AG04450 (cell line): ENCODE measurements at regions of chr2 and their contacts with region 1.

Region 1: GRCh38 chr2:128692895-128693742 is 374.5 kb upstream of the HS6ST1 start:
- DNase-seq: no peak
- H3K4me3 ChIP-seq: no peak overlapping the region
- H3K27ac ChIP-seq: no peak overlapping the region
- H3K27me3 ChIP-seq: peaks cover 39% of the 10 kb centered on the region
- CTCF ChIP-seq: no peak

Region 2: GRCh38 chr2:128557069-128557468 is 136.1 kb before region 1 on chr2:
- CTCF ChIA-PET with region 1: no interaction called
- POLR2A ChIA-PET with region 1: interaction called, 10 read pairs
- DNase-seq: no peak
- H3K4me3 ChIP-seq: no peak overlapping the region
- H3K27ac ChIP-seq: no peak overlapping the region
- H3K27me3 ChIP-seq: no peaks in the 10 kb centered on the region
- CTCF ChIP-seq: no peak

Region 3: DNA sequence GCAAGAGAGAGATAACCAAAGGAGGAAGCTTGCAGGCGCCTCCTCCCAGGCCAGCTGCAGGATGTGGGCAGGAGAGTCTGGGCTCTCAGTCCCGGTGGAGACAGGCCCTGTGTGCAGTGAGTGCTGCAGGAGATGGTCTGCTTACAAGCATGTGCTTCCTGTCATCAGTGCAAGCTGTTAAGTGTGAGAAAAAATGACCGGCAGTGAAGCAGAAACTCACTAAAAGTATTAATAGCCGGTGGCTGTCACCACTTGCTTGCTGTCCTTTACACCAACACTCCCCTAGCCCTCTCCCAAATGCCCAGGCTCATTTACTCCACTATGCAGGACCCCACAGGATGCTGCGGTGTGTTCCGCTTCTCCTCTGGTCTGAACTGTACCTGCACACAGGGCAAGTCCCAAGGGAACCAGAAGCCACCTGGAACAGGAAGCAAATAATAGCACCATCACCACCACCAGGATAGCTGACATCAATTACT is 61.2 kb after region 1 on chr2:
- CTCF ChIA-PET with region 1: no interaction called
- POLR2A ChIA-PET with region 1: no interaction called
- DNase-seq: no peak
- H3K4me3 ChIP-seq: no peak overlapping the region
- H3K27ac ChIP-seq: no peak overlapping the region
- H3K27me3 ChIP-seq: peaks cover 27% of the 10 kb centered on the region
- CTCF ChIP-seq: no peak